Activated T-helper 2 cell treated with anti-CD3 and anti-CD28 coated beads, Interferon-gamma antibody, Interleukin-2, Interleukin-4, amounts not matched to agents 10 μg/mL and 5 μg/mL and 100 μg/mL, durations not matched to agents 14 hours and 24 hours and 36 hours (primary cell): ENCODE measurements at regions of chr5 and their contacts with region 1.

Region 1: DNA sequence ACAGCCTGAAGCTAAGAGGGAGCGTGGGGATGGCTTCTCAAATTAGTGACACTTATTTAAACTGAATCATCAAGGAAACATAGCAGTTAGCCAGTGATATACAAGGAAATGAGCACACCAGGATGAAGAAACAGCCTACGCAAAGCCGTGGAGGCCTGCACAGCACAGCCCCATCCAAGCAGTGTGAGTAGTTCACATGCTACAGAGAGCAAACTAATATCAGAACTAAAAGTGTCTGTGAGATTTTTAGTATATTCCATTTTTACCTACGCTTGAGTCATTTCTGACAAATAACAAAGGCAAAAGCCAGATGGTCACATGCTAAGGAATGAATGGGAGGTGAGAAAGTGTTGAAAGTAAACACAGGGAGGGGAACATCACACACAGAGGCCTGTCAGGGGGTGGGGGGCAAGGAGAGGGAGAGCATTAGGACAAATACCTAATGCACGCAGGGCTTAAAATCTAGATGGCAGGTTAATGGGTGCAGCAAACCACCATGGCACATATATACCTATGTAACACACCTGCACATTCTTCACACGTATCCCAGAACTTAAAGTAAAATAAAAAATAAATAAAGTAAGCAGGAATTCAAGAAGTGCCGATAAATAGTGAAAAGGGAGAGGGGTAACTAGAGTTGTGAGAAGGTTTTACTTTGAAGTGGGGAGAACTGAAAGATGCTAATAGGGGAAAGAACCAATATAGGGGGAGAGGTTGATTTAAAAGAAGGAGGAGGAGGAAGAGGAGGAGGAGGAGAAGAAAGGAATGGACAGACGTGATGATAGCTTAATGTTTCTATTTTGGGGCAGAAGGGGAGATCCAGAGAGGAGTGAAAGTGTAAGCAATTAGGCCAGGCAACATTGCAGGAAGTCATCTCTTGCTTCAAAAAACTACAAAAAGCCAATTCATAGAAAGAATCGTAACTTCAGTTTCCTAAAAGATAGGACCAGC is 100.9 kb upstream of the PTGER4 start:
- DNase-seq: peak; percentile 19
- H3K4me3 Mint-ChIP-seq: peak overlapping the region; percentile 59
- H3K27ac Mint-ChIP-seq: peak overlapping the region; percentile 87
- H3K4me1 Mint-ChIP-seq: peaks cover 36% of the 10 kb centered on the region
- H3K27me3 Mint-ChIP-seq: no peaks in the 10 kb centered on the region

Region 2: GRCh38 chr5:40333459-40334244 is 245.1 kb before region 1 on chr5:
- intact Hi-C with region 1: loop called (anchors 2 kb)
- DNase-seq: no peak
- H3K4me3 Mint-ChIP-seq: no peak overlapping the region
- H3K27ac Mint-ChIP-seq: peak overlapping the region; percentile 43
- H3K4me1 Mint-ChIP-seq: peaks cover 43% of the 10 kb centered on the region
- H3K27me3 Mint-ChIP-seq: no peaks in the 10 kb centered on the region

Region 3: GRCh38 chr5:40428126-40428525 is 150.7 kb before region 1 on chr5:
- intact Hi-C with region 1: loop called (anchors 2 kb)
- DNase-seq: no peak
- H3K4me3 Mint-ChIP-seq: no peak overlapping the region
- H3K27ac Mint-ChIP-seq: peak overlapping the region; percentile 76
- H3K4me1 Mint-ChIP-seq: peaks cover 49% of the 10 kb centered on the region
- H3K27me3 Mint-ChIP-seq: no peaks in the 10 kb centered on the region

Region 4: GRCh38 chr5:40486437-40487275 is 92.1 kb before region 1 on chr5:
- intact Hi-C with region 1: loop called (anchors 1 kb)
- DNase-seq: peak; percentile 64
- H3K4me3 Mint-ChIP-seq: peak overlapping the region; percentile 19
- H3K27ac Mint-ChIP-seq: peak overlapping the region; percentile 75
- H3K4me1 Mint-ChIP-seq: peaks cover 78% of the 10 kb centered on the region
- H3K27me3 Mint-ChIP-seq: no peaks in the 10 kb centered on the region

Region 5: GRCh38 chr5:40646286-40646685 is 67.5 kb after region 1 on chr5:
- intact Hi-C with region 1: loop called (anchors 1 kb)
- DNase-seq: no peak
- H3K4me3 Mint-ChIP-seq: no peak overlapping the region
- H3K27ac Mint-ChIP-seq: no peak overlapping the region
- H3K4me1 Mint-ChIP-seq: peaks cover 31% of the 10 kb centered on the region
- H3K27me3 Mint-ChIP-seq: no peaks in the 10 kb centered on the region

Region 6: GRCh38 chr5:40688127-40688761 is 109.5 kb after region 1 on chr5:
- intact Hi-C with region 1: loop called (anchors 1 kb)
- DNase-seq: peak; percentile 76
- H3K4me3 Mint-ChIP-seq: peak overlapping the region; percentile 76
- H3K27ac Mint-ChIP-seq: peak overlapping the region; percentile 73
- H3K4me1 Mint-ChIP-seq: peaks cover 70% of the 10 kb centered on the region
- H3K27me3 Mint-ChIP-seq: no peaks in the 10 kb centered on the region

Region 7: DNA sequence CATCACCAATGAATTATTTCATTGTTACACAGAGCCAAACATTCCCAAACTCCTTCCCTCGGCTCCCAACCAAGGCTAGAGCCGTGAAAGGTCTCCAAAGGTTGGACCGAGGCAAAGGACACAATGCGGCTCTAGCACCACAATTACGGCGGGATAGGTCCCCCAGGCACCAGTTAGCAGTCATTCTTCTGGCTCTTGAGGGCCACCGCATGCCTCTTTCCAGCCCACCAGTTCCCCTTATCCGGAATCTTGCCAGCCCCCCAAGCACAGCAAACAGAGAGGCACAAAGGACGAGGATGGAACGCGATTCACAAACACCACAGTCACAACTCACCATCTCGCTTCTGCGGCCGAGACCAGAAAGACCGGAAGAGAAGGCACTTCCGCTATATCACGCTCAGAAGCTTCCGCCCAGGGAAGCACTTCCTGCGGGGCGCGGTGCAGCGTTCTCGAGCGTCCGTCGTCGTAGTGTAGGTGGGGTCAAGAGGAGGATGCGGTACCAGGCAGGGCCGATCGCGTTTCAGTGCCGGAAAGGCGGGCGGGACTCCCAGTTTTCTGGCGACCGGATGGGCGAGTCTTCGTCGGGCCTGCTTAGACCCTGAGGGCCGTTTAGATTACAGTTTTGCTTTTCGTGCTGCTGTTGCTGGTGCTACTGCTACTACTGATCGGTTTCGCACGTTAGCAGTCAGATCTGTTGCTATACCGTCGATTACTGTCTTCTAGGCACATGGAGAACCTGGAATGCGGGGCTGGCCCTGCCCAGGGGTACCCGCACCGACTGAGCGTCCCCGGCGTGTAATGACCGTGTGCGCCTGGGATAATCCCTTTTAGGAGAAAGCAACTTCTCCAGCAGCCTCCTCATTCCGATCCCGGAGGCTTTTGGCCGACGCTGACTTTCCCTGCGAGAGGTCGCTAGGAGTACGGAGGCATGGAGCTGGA is 256.3 kb after region 1 on chr5 and contains the start of gene RPL37:
- intact Hi-C with region 1: loop called (anchors 5 kb)
- DNase-seq: peak; percentile 91
- H3K4me3 Mint-ChIP-seq: peak within 1 kb of the TSS; percentile 99
- H3K27ac Mint-ChIP-seq: peak within 1 kb of the TSS; percentile 98
- H3K4me1 Mint-ChIP-seq: peaks cover 47% of the 10 kb centered on the region
- H3K27me3 Mint-ChIP-seq: no peaks in the 10 kb centered on the region
- total RNA-seq, gene RPL37: 1,583 and 1,632 TPM in 2 replicates